Heart right ventricle (tissue), 16 donors: ENCODE measurements at regions of chr7 and their contacts with region 1.

Region 1: GRCh38 chr7:47273974-47274766 is 307.7 kb downstream of the TNS3 start:
- DNase-seq: no peak
- ATAC-seq: peak in 1 of 8 donors; percentile 40
- H3K4me3 ChIP-seq: no peak overlapping the region
- H3K27ac ChIP-seq: no peak overlapping the region
- H3K4me1 ChIP-seq: peaks cover 0 to 4% (median 0%) of the 10 kb centered on the region in 9 donors
- H3K27me3 ChIP-seq: no peaks in the 10 kb centered on the region
- CTCF ChIP-seq: no peak

Region 2: GRCh38 chr7:47337531-47337930 is 63.4 kb after region 1 on chr7:
- intact Hi-C with region 1: loop called in 3 of 10 experiments (anchors 5 to 10 kb)
- DNase-seq: peak; percentile 38 to 42
- ATAC-seq: peak in 7 of 8 donors; percentile 56 to 75 (median 67)
- H3K4me3 ChIP-seq: no peak overlapping the region
- H3K27ac ChIP-seq: peak overlapping the region in 5 of 10 donors; percentile 70 to 82 (median 77)
- H3K4me1 ChIP-seq: peaks cover 0 to 52% (median 30%) of the 10 kb centered on the region in 9 donors
- H3K27me3 ChIP-seq: no peaks in the 10 kb centered on the region
- CTCF ChIP-seq: peak in 6 of 9 donors; percentile 9 to 48 (median 40)

Region 3: GRCh38 chr7:47418601-47419381 is 144.6 kb after region 1 on chr7:
- intact Hi-C with region 1: loop called in 1 of 10 experiments (anchors 10 kb)
- DNase-seq: no peak
- ATAC-seq: no peak
- H3K4me3 ChIP-seq: no peak overlapping the region
- H3K27ac ChIP-seq: no peak overlapping the region
- H3K4me1 ChIP-seq: peaks cover 0 to 20% (median 5%) of the 10 kb centered on the region in 9 donors
- H3K27me3 ChIP-seq: no peaks in the 10 kb centered on the region
- CTCF ChIP-seq: no peak

Region 4: GRCh38 chr7:47428092-47428767 is 154.1 kb after region 1 on chr7:
- intact Hi-C with region 1: loop called in 5 of 10 experiments (anchors 2 to 10 kb)
- DNase-seq: no peak
- ATAC-seq: peak in 3 of 8 donors; percentile 23 to 45 (median 24)
- H3K4me3 ChIP-seq: no peak overlapping the region
- H3K27ac ChIP-seq: peak overlapping the region in 1 of 10 donors; percentile 15
- H3K4me1 ChIP-seq: peaks cover 0 to 19% (median 9%) of the 10 kb centered on the region in 9 donors
- H3K27me3 ChIP-seq: no peaks in the 10 kb centered on the region
- CTCF ChIP-seq: no peak

Region 5: DNA sequence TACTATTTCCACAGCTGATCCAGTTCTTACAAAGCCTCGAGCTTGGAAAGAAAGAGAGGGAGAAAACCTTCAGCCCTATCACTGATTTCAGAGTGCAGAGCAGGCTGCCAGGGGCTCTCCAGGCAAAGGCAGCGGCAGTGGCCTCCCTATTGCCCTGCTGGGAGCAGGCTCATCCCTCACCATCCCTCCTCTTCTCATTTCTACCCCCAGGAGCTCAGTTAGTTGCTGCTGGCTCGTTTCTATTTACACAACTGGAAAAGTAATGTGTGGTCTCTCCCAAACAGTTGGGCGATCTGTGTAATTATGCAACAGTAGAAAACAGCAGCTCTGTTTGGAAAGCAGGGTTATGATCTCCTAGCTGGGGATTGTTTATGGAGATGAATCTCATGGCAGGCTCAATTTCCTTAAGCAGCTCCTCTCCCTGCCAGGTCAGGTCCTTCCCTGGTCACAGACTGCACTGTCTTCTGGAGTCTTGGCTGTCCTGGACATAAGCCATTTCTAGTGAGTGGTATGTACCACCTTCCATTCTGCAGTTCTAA is 336.4 kb after region 1 on chr7:
- intact Hi-C with region 1: no loop called
- DNase-seq: no peak
- ATAC-seq: peak; percentile 44 to 78 (median 70)
- H3K4me3 ChIP-seq: no peak overlapping the region
- H3K27ac ChIP-seq: peak overlapping the region in 8 of 10 donors; percentile 31 to 74 (median 54)
- H3K4me1 ChIP-seq: peaks cover 2 to 28% (median 14%) of the 10 kb centered on the region in 9 donors
- H3K27me3 ChIP-seq: no peaks in the 10 kb centered on the region
- CTCF ChIP-seq: no peak